ENCODE measurements at regions of chr2 and their contacts with region 1.

Region 1: DNA sequence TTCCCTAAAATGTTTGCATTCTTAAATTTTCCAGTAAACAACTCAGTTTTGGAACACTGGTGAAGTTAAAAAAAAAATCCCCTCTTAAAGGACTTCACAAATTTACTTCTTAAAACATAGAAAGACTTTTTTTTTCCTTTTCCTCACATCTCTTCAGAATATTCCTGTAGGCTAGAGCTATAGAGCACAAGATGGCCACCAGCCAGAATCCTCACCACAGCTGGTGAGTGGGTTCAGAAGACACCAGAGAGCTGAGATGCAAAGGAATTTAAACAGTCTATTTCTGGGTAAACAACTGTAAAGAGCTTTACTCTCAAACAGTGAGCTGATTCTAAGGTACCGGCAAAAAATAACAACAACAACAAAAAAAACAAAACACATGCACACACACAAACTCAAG is 252.8 kb downstream of the LRP1B start:
- DNase-seq: no peak
- ATAC-seq: no peak
- H3K4me3 ChIP-seq: no peak overlapping the region
- H3K27ac ChIP-seq: no peak overlapping the region
- H3K4me1 ChIP-seq: peaks cover 6% of the 10 kb centered on the region
- H3K27me3 ChIP-seq: no peaks in the 10 kb centered on the region
- CTCF ChIP-seq: no peak

Region 2: GRCh38 chr2:141889788-141890187 is 11.8 kb after region 1 on chr2:
- CTCF ChIA-PET with region 1: no interaction called
- POLR2A ChIA-PET with region 1: no interaction called
- intact Hi-C with region 1: loop called (anchors 2 kb)
- DNase-seq: no peak
- ATAC-seq: no peak
- H3K4me3 ChIP-seq: no peak overlapping the region
- H3K27ac ChIP-seq: no peak overlapping the region
- H3K4me1 ChIP-seq: no peaks in the 10 kb centered on the region
- H3K27me3 ChIP-seq: no peaks in the 10 kb centered on the region; the same call in 1 of the 2 replicates
- CTCF ChIP-seq: no peak

Measured in PC-3 (cell line).